Aorta (tissue), 5 donors: ENCODE measurements at regions of chrX and their contacts with region 1.

Region 1: GRCh38 chrX:103711533-103712369 is 1.0 kb downstream of the TMEM31 start:
- DNase-seq: peak in 1 of 2 donors; percentile 54
- ATAC-seq: peak; percentile 45
- H3K4me3 ChIP-seq: no peak overlapping the region
- H3K27ac ChIP-seq: no peak overlapping the region
- H3K4me1 ChIP-seq: no peaks in the 10 kb centered on the region
- H3K27me3 ChIP-seq: no peaks in the 10 kb centered on the region

Region 2: GRCh38 chrX:103774070-103774642 is 62.4 kb after region 1 on chrX:
- intact Hi-C with region 1: loop called in 1 of 2 experiments (anchors 5 kb)
- DNase-seq: no peak
- ATAC-seq: no peak
- H3K4me3 ChIP-seq: no peak overlapping the region
- H3K27ac ChIP-seq: no peak overlapping the region
- H3K4me1 ChIP-seq: no peaks in the 10 kb centered on the region
- H3K27me3 ChIP-seq: no peaks in the 10 kb centered on the region

Region 3: DNA sequence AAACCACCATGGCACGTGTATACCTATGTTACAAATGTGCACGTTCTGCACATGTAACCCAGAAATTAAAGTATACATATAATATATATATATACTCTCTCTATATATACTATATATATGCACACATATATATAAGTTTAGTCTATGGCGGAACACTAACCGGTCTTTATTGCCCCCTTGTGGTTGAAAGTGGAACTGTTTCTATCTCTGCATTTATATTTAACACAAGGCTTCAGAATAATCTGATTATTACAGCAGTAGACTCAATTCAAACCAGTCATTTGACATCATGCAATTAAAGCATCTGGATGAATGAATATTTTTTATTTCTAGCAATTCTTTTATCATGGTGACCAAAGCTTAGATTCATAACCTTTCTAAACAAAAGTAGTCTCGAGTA is 105.8 kb after region 1 on chrX:
- intact Hi-C with region 1: loop called in 1 of 2 experiments (anchors 10 kb)
- DNase-seq: no peak
- ATAC-seq: peak; percentile 75
- H3K4me3 ChIP-seq: no peak overlapping the region
- H3K27ac ChIP-seq: no peak overlapping the region
- H3K4me1 ChIP-seq: no peaks in the 10 kb centered on the region
- H3K27me3 ChIP-seq: no peaks in the 10 kb centered on the region